Activated CD4-positive, alpha-beta T cell treated with anti-CD3 and anti-CD28 coated beads for 36 hours (primary cell): ENCODE measurements at regions of chr6 and their contacts with region 1.

Region 1: DNA sequence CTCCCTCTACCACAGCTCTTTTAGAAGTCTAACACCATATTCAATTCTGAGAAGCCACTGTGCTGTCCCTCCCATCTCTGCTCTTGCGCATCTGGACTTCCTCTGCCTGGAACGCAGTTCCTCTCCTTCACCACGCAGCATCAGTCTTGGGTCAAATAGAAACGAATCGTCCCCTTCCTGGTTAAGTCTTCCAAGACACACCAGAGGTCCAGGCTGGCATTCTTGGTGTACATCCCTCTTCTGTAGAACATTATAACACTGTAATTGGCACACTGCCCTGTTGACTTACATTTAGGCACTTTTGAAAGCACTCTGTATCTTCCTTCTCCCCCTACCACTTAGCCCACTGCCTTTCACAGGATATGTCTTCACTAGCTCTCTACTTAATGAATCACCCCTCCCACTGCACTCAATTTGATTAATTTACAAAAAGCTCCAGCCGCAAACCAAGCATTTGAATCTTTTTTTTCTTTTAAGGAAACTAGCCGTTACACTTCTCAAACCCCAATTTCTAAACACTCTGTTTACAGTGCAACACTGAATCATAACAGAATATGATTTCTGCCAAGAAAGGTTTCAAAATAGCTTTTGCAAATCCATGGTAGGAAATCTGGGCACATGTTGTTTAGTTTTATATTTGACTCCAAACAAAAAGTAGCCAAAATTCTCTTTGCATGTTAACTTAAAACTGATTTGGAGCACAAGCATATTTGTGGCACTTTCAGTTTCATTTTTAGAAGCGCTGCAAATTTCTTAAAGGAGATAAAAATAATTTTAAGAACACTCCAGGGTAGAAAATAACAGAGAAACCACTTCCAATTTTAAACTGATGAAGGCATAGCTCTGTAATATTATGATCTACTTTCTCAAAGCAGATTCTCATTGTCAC is 140.7 kb upstream of the CARMIL1 start:
- DNase-seq: peak; percentile 81
- ATAC-seq: peak; percentile 93
- H3K4me3 Mint-ChIP-seq: peak overlapping the region; percentile 81
- H3K27ac Mint-ChIP-seq: peak overlapping the region; percentile 97
- H3K4me1 Mint-ChIP-seq: peaks cover 31% of the 10 kb centered on the region
- H3K27me3 Mint-ChIP-seq: no peaks in the 10 kb centered on the region

Region 2: DNA sequence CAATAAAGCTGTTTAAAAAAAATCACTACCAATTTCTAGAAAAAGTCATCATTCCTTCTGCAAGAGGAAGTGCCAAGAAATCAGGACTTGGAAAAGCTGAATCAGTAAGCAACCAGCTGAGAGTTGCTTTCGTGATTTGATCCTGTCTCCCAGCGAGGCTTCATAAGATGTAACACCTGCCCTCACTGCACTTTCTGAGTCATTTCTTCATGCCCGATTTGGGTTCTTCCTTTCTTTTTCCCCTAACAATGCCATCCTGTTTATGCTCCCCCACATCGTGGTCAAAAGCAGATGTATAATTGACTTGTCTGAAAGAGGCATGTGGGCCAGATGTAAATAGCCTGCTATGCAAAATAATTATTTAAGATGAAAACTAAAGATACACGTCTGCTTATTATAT is 254.9 kb before region 1 on chr6:
- CTCF ChIA-PET with region 1: no interaction called
- POLR2A ChIA-PET with region 1: no interaction called
- intact Hi-C with region 1: loop called in 1 of 2 experiments (anchors 1 kb)
- DNase-seq: peak; percentile 69
- ATAC-seq: peak; percentile 85
- H3K4me3 Mint-ChIP-seq: peak overlapping the region; percentile 72
- H3K27ac Mint-ChIP-seq: peak overlapping the region; percentile 100
- H3K4me1 Mint-ChIP-seq: peaks cover 88% of the 10 kb centered on the region
- H3K27me3 Mint-ChIP-seq: no peaks in the 10 kb centered on the region

Region 3: GRCh38 chr6:25085756-25086155 is 52.7 kb before region 1 on chr6:
- CTCF ChIA-PET with region 1: no interaction called
- POLR2A ChIA-PET with region 1: interaction called, 5 read pairs
- intact Hi-C with region 1: loop called in 1 of 2 experiments (anchors 5 kb)
- DNase-seq: no peak
- ATAC-seq: peak; percentile 34
- H3K4me3 Mint-ChIP-seq: no peak overlapping the region
- H3K27ac Mint-ChIP-seq: no peak overlapping the region
- H3K4me1 Mint-ChIP-seq: peaks cover 19% of the 10 kb centered on the region
- H3K27me3 Mint-ChIP-seq: no peaks in the 10 kb centered on the region

Region 4: DNA sequence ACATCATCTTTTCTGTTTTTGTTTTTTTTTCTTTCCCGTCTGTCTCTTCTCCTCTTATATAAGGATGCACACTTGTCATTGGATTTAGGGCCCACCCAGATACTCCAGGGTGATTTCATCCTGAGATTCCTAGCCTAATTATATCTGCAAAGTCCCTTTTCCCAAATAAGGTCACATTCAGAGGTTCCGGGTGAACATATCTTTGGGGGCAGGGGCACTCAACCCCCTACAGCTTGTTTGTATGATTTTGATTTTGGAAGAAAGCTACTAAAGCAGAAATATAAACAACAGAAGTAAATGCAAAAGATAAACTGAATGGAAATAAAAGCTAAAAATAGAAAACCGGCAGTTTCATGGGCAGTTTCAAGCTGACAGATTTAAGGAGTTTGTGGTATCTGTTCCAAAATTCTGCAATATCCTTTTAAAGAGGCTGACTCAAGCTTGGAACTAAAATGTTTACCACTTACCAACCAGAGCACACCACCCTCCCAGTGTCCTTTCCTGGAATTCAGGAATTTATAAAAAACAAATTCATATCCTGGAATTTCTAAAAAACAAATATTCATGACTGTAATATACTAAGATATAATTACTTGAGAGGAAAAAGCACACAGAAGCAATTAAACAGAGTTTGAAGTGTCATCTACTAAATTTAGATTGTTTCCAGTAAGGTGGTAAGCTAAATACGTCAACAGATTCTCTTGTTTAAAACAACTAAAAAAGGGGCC is 40.7 kb after region 1 on chr6:
- CTCF ChIA-PET with region 1: interaction called, 6 read pairs
- POLR2A ChIA-PET with region 1: no interaction called
- intact Hi-C with region 1: loop called (anchors 1 to 2 kb)
- DNase-seq: no peak
- ATAC-seq: peak; percentile 42
- H3K4me3 Mint-ChIP-seq: no peak overlapping the region
- H3K27ac Mint-ChIP-seq: peak overlapping the region; percentile 61
- H3K4me1 Mint-ChIP-seq: peaks cover 30% of the 10 kb centered on the region
- H3K27me3 Mint-ChIP-seq: no peaks in the 10 kb centered on the region

Region 5: DNA sequence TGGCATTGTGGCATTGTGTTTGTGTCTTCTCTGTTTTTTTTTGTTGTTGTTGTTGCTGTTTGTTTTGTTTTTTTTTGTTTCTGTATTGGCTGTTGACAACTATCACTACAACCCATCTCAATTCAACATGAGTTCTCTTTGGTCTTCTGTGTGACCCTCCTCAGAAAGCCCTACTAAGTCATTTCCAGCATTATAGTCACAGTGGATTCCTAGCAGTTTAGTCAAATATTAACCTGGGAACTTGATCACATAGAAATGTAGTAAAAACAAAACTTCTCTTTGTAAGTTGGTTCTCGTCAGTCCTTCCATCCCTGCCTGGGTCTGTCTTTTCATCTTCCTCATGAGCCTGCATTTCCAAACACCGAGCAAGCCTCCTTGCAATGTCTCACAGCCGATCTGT is 775.3 kb after region 1 on chr6:
- CTCF ChIA-PET with region 1: no interaction called
- POLR2A ChIA-PET with region 1: no interaction called
- intact Hi-C with region 1: loop called in 1 of 2 experiments (anchors 10 kb)
- DNase-seq: peak; percentile 44
- ATAC-seq: peak; percentile 67
- H3K4me3 Mint-ChIP-seq: no peak overlapping the region
- H3K27ac Mint-ChIP-seq: peak overlapping the region; percentile 75
- H3K4me1 Mint-ChIP-seq: peaks cover 63% of the 10 kb centered on the region
- H3K27me3 Mint-ChIP-seq: no peaks in the 10 kb centered on the region